Calu3 (cell line): ENCODE measurements at regions of chr4 and their contacts with region 1.

Region 1: GRCh38 chr4:80221161-80221560 is 23.9 kb downstream of the PRDM8 start:
- DNase-seq: no peak
- H3K4me3 Mint-ChIP-seq: no peak overlapping the region
- H3K27ac Mint-ChIP-seq: no peak overlapping the region
- H3K4me1 Mint-ChIP-seq: no peaks in the 10 kb centered on the region
- H3K27me3 Mint-ChIP-seq: no peaks in the 10 kb centered on the region
- CTCF ChIP-seq: no peak

Region 2: DNA sequence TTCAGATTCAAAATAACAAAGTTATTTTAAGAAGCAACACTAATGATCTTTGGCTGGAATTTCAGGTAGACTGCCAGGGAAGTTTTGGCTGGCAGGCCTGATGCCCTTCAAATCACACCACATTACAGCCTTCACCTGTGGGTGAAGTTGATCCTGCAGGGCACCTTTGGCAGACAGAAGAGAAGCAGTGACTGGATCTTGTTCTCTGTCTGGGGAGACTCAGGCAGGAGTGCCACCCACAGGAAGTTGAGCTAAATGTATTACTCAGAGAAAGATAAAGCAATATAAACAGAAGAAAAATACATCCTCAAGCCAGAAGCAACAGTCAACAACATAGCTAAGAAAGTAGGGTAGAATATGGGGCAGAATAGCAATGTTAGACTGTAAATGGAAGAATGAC is 101.6 kb after region 1 on chr4:
- CTCF ChIA-PET with region 1: interaction called, 9 read pairs
- intact Hi-C with region 1: loop called (anchors 1 kb)
- DNase-seq: peak; percentile 24
- H3K4me3 Mint-ChIP-seq: no peak overlapping the region
- H3K27ac Mint-ChIP-seq: no peak overlapping the region
- H3K4me1 Mint-ChIP-seq: peaks cover 9% of the 10 kb centered on the region
- H3K27me3 Mint-ChIP-seq: no peaks in the 10 kb centered on the region
- CTCF ChIP-seq: no peak

Region 3: DNA sequence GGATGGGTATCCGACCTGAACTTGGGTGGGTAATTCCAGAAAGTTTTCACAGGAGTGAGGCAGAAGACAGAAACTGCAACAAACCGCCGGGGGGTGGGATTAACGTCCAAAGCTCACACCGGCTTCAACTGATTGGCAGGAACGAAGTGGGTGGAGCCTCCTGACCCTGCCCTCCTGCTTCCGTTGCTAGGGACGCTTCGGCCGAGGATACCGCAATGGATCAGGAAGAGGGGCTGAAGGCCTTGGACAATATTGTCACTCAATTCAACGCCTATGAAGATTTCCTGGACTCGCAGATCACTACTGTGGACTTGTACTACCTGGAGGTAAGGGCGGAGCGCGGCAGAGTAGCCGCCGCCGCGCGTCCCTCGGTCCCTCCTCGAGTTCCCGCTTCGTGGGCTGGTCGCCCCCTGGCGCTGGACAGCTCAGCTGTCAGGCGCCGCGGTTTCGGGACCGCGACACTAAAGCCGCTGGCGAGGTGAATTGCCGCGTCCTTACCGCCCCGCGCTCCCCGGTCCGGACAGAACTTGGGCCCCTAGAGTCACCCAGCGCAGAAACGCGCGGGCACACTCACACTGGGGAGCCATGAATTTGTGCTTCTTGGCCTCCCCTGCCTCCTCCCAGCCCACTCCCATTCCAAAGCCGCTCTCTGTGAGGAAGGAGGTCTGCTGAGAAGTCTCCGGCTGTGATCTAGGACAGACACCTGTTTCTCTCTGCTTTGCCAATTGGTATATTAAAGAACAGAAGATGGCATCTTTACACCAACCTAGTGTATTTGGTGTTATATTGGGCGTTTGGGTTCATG is 114.6 kb after region 1 on chr4 and contains the start of gene CFAP299:
- CTCF ChIA-PET with region 1: interaction called, 4 read pairs
- intact Hi-C with region 1: loop called (anchors 2 kb)
- DNase-seq: peak; percentile 83
- H3K4me3 Mint-ChIP-seq: peak within 1 kb of the TSS; percentile 96
- H3K27ac Mint-ChIP-seq: no peak within 1 kb of the TSS
- H3K4me1 Mint-ChIP-seq: no peaks in the 10 kb centered on the region
- H3K27me3 Mint-ChIP-seq: no peaks in the 10 kb centered on the region
- CTCF ChIP-seq: peak; percentile 49
- total RNA-seq, gene CFAP299: not detected in 2 replicates

Region 4: GRCh38 chr4:81052119-81053068 is 831.2 kb after region 1 on chr4:
- CTCF ChIA-PET with region 1: no interaction called
- intact Hi-C with region 1: loop called (anchors 5 kb)
- DNase-seq: peak; percentile 72
- H3K4me3 Mint-ChIP-seq: no peak overlapping the region
- H3K27ac Mint-ChIP-seq: no peak overlapping the region
- H3K4me1 Mint-ChIP-seq: no peaks in the 10 kb centered on the region
- H3K27me3 Mint-ChIP-seq: no peaks in the 10 kb centered on the region
- CTCF ChIP-seq: peak; percentile 61